ENCODE measurements at regions of chr3 and their contacts with region 1.

Region 1: GRCh38 chr3:88180398-88180999 is 30.7 kb downstream of the C3orf38 start:
- DNase-seq: peak in 1 of 2 donors; percentile 70
- ATAC-seq: peak in 2 of 3 donors; percentile 40 to 63
- H3K4me3 ChIP-seq: no peak overlapping the region
- H3K4me3 Mint-ChIP-seq: no peak overlapping the region
- H3K27ac ChIP-seq: no peak overlapping the region
- H3K27ac Mint-ChIP-seq: no peak overlapping the region
- H3K4me1 ChIP-seq: no peaks in the 10 kb centered on the region
- H3K4me1 Mint-ChIP-seq: no peaks in the 10 kb centered on the region
- H3K27me3 ChIP-seq: no peaks in the 10 kb centered on the region
- H3K27me3 Mint-ChIP-seq: peaks cover 8 to 17% of the 10 kb centered on the region in 2 donors
- CTCF ChIP-seq: peak; percentile 63

Region 2: GRCh38 chr3:87298111-87298718 is 882.3 kb before region 1 on chr3:
- intact Hi-C with region 1: loop called (anchors 2 kb)
- DNase-seq: peak in 1 of 2 donors; percentile 58
- ATAC-seq: peak; percentile 46 to 67 (median 64)
- H3K4me3 ChIP-seq: no peak overlapping the region
- H3K4me3 Mint-ChIP-seq: no peak overlapping the region
- H3K27ac ChIP-seq: no peak overlapping the region
- H3K27ac Mint-ChIP-seq: no peak overlapping the region
- H3K4me1 ChIP-seq: no peaks in the 10 kb centered on the region
- H3K4me1 Mint-ChIP-seq: no peaks in the 10 kb centered on the region
- H3K27me3 ChIP-seq: no peaks in the 10 kb centered on the region
- H3K27me3 Mint-ChIP-seq: no peaks in the 10 kb centered on the region
- CTCF ChIP-seq: peak; percentile 80

Region 3: GRCh38 chr3:87350364-87351199 is 829.9 kb before region 1 on chr3:
- intact Hi-C with region 1: loop called (anchors 1 kb)
- DNase-seq: peak in 1 of 2 donors; percentile 71
- ATAC-seq: peak; percentile 90 to 95 (median 91)
- H3K4me3 ChIP-seq: no peak overlapping the region
- H3K4me3 Mint-ChIP-seq: no peak overlapping the region
- H3K27ac ChIP-seq: no peak overlapping the region
- H3K27ac Mint-ChIP-seq: no peak overlapping the region
- H3K4me1 ChIP-seq: no peaks in the 10 kb centered on the region
- H3K4me1 Mint-ChIP-seq: no peaks in the 10 kb centered on the region
- H3K27me3 ChIP-seq: no peaks in the 10 kb centered on the region
- H3K27me3 Mint-ChIP-seq: peaks cover 0 to 5% of the 10 kb centered on the region in 2 donors
- CTCF ChIP-seq: peak; percentile 95

Region 4: GRCh38 chr3:87771341-87772192 is 408.9 kb before region 1 on chr3:
- intact Hi-C with region 1: loop called (anchors 2 kb)
- DNase-seq: peak in 1 of 2 donors; percentile 67
- ATAC-seq: peak; percentile 61 to 80 (median 76)
- H3K4me3 ChIP-seq: no peak overlapping the region
- H3K4me3 Mint-ChIP-seq: no peak overlapping the region
- H3K27ac ChIP-seq: no peak overlapping the region
- H3K27ac Mint-ChIP-seq: no peak overlapping the region
- H3K4me1 ChIP-seq: no peaks in the 10 kb centered on the region
- H3K4me1 Mint-ChIP-seq: no peaks in the 10 kb centered on the region
- H3K27me3 ChIP-seq: no peaks in the 10 kb centered on the region
- H3K27me3 Mint-ChIP-seq: peaks cover 0 to 8% of the 10 kb centered on the region in 2 donors
- CTCF ChIP-seq: peak; percentile 55

Region 5: DNA sequence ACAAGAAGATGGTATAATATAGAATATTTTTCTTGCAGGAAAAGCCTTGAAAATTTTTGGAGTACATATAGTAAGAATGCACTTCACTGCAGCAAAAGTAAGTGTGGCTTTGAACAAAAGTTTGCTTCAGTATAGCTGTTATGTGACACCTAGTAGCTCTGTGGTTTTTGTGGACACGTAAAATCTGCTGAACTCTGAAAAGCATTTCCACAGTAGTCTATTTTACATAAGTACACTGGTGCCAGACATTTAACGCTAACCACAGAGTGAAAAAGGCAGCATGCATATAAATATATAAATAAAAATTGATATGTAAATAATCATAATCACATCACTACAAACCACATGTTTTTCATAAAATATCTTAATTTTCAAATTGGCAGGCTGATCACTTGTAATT is 161.5 kb before region 1 on chr3:
- intact Hi-C with region 1: no loop called
- DNase-seq: peak in 1 of 2 donors; percentile 63
- ATAC-seq: peak; percentile 89 to 99 (median 89)
- H3K4me3 ChIP-seq: no peak overlapping the region
- H3K4me3 Mint-ChIP-seq: peak overlapping the region; percentile 19
- H3K27ac ChIP-seq: no peak overlapping the region
- H3K27ac Mint-ChIP-seq: no peak overlapping the region
- H3K4me1 ChIP-seq: peaks cover 8% of the 10 kb centered on the region
- H3K4me1 Mint-ChIP-seq: peaks cover 17 to 24% of the 10 kb centered on the region in 2 donors
- H3K27me3 ChIP-seq: no peaks in the 10 kb centered on the region
- H3K27me3 Mint-ChIP-seq: peaks cover 18 to 58% of the 10 kb centered on the region in 2 donors
- CTCF ChIP-seq: no peak

Region 6: DNA sequence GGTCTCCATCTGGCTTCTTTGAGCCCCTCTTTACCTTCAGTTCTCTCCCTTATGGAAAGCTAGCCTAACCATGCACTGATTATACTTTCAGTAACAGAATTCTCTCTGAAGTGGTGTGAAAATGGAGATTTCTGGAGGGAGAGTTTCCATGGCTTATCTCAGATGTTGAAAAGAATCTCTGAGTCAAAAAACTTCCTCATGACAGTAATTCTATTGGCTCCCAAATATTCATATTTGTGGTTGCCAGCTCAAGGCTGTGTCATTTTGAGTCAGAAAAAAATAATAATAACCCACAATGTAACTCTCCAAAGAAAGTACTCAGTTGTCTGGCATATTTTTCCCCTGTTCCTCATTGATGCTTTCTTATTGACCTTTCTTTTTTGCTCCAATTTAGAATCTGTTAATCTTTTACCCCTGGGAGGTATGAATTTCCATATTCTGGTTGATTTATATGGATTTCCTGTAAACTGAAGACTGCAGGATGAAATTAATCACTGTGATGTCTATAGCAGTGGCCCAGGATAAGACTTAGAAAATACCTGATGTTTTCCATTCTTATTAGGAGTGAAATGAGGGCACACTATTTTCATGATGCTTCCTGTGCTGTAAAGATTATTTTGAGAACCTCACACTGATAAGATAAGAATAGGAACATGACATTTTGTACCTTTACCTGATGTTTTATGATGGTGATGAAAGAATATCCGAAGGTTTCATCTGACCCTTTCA is 777.4 kb after region 1 on chr3:
- intact Hi-C with region 1: no loop called
- DNase-seq: no peak
- ATAC-seq: no peak
- H3K4me3 ChIP-seq: no peak overlapping the region
- H3K4me3 Mint-ChIP-seq: no peak overlapping the region
- H3K27ac ChIP-seq: no peak overlapping the region
- H3K27ac Mint-ChIP-seq: no peak overlapping the region
- H3K4me1 ChIP-seq: no peaks in the 10 kb centered on the region
- H3K4me1 Mint-ChIP-seq: no peaks in the 10 kb centered on the region
- H3K27me3 ChIP-seq: no peaks in the 10 kb centered on the region
- H3K27me3 Mint-ChIP-seq: no peaks in the 10 kb centered on the region
- CTCF ChIP-seq: no peak